ENCODE measurements at regions of chr10 and their contacts with region 1.

Region 1: GRCh38 chr10:93437088-93437945 is 44.8 kb downstream of the MYOF start:
- DNase-seq: peak; percentile 85

Region 2: GRCh38 chr10:93420091-93420490 is 17.2 kb before region 1 on chr10:
- intact Hi-C with region 1: loop called (anchors 1 kb)
- DNase-seq: no peak

Region 3: DNA sequence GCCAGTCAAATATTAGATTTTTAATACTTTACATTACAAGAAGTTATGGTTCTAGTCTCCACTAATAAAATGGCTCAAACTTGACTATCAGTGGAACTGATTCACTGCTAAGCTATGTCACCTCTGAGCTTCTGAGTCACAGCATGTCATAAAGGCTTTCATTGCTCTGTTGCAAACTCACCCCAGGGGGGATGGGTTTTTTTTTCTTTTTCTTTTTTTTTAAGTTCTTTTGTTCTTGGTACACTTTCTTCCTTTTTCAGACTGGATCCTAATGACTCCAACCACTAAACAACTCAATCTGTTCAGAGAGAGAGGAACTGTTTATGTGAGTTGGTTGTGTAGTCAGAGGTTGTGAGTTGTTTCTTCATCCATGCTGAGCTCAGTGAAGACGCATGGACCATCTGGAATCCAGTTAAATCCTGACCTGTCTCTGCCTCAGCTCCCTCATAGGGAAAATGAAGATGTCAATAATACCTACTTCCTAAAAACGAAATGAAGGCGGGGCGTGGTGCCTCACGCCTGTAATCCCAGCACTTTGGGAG is 33.9 kb after region 1 on chr10:
- intact Hi-C with region 1: loop called (anchors 1 kb)
- DNase-seq: no peak

Region 4: DNA sequence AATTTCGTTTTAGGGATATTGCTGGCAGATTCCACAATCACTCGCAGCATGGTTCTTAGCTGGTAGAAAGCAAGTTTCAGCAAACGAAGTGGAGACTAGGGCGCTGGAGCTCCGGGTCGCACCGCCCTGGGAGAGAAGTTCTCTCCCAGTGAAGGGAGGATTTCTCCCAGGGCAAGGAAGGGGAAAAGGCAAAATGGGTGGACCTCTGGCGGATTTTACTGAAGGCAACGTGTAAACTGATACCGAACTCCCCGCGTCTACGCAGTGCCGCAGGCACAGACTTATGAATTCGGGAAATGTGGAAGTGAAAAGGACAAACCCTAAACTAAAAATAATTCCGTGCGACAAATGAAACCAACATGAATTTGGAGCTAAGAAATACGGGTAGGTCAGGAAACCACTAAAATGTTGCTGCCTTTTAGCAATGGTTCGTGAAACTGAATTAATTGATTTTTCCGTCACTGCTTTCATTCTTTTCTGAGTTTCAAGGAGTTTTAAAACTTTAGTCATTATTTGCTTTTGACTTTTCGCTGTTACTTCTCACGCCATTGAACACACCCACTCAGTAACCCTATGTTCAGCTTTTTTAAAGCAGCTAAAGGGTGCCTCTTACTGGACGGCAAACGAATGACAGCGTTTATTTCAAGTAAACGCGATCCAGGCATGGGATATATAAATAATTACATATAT is 45.0 kb after region 1 on chr10 and contains the start of gene MYOF:
- intact Hi-C with region 1: loop called (anchors 1 kb)
- DNase-seq: no peak
- total RNA-seq, gene MYOF: 82.5 TPM

Measured in cardiac septum (tissue), 1 donor.